Cardiac septum (tissue), 1 donor: ENCODE measurements at regions of chr1 and their contacts with region 1.

Region 1: GRCh38 chr1:178172954-178173353 is 79.0 kb downstream of the RASAL2 start:
- DNase-seq: no peak

Region 2: GRCh38 chr1:178031856-178032320 is 141.1 kb before region 1 on chr1:
- intact Hi-C with region 1: no loop called
- DNase-seq: peak; percentile 89

Region 3: GRCh38 chr1:178134061-178134460 is 38.9 kb before region 1 on chr1:
- intact Hi-C with region 1: loop called (anchors 5 kb)
- DNase-seq: no peak

Region 4: GRCh38 chr1:178218550-178218949 is 45.6 kb after region 1 on chr1:
- intact Hi-C with region 1: no loop called
- DNase-seq: no peak